Posterior vena cava (tissue), 2 donors: ENCODE measurements at regions of chr16 and their contacts with region 1.

Region 1: DNA sequence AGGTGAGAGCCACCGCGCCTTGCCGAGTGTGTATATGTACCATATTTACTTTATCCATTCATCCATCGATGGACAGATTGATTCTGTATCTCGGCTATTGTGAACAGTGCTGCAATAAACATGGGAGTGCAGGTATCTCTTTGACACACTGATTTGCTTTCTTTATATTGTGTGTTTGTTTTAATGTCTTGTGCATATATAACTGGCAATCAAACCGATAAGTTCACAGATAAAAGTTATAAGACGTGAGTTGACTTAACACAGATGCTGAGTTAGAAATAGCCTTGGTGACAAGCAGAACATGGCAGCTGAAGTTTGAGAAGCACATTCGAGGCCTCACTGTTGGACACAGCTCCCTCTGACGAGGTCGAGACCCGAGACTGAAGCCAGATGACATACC is 23.2 kb downstream of the TMEM186 start:
- DNase-seq: no peak

Region 2: DNA sequence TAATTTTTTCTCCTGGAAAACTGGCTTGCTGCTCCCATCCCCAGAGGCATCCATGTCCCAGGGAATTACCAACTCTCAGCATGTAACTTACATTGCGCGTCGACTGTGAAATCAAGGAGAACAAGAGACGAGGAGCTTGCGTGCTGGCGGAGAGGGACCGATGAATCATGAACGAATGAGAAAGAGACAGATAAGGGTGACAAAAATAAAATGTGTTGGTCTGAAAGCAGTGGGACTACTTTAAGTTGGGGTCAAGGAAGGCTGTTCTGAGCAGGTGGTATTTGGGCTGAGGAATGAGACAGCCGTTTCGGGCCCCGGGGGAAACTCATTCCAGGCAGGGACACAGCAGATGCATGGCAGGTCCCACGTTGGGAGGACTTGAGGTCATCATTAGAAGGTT is 77.3 kb before region 1 on chr16:
- intact Hi-C with region 1: no loop called
- DNase-seq: no peak

Region 3: DNA sequence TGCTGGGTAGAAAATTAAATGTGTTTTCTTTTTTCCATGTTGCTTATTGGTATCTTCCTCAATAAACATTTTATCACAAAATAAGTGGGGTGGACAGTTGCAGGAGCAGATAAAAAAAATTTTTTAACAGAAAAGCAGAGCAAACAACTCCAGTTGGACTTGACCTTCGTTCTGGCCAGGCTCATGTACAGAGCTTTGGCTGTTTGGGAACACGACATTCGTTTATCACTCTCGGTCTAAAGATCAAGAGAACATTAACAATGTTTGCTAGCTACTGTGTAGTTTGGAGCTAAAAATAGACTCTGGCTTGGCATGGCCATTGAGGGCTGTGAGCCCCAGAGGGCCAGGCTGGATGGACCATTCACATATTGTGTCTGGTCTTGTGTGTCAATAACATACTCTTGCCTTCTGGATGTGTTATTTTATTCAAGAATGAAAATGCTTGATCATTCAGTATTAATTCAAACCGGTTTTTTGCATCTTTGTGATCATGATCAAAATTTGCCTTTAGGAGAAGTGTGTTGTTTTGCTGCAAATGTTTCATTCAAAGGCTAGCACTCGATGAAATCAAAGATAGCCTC is 33.3 kb before region 1 on chr16:
- intact Hi-C with region 1: loop called in 1 of 2 experiments (anchors 1 kb)
- DNase-seq: no peak

Region 4: DNA sequence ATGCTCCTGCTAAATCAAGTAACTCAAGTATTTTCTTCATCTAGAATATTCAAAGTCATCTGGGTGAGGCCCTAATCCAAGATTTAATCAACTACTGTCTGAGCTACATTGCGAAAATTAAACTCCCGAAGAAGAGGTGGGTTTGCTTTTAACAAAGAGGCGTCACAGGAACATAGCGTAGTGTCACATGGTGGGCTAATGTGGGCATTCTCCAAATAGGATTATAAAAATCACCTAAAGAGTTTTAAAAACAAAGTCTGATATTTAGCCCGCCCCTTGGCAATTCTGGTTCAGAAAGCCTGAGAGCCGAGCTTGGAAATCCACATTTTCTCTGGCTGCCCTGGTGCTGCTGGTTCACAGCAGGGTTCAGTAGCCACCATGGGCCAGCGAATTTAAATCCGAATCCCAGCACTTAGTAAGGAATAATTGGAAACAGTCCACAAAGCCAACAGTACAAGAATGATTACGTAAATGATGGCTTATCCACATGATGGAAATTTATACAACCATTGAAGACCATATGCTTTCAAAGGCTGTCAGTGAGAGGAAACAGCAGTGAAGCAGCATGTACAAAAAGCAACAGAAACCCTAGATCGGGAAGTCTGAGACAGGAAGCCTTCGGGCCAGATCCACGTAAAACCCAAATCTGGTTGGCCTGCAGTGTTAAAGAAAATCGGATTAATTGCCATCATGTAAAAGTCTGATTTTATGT is 32.2 kb after region 1 on chr16:
- intact Hi-C with region 1: no loop called
- DNase-seq: no peak

Region 5: DNA sequence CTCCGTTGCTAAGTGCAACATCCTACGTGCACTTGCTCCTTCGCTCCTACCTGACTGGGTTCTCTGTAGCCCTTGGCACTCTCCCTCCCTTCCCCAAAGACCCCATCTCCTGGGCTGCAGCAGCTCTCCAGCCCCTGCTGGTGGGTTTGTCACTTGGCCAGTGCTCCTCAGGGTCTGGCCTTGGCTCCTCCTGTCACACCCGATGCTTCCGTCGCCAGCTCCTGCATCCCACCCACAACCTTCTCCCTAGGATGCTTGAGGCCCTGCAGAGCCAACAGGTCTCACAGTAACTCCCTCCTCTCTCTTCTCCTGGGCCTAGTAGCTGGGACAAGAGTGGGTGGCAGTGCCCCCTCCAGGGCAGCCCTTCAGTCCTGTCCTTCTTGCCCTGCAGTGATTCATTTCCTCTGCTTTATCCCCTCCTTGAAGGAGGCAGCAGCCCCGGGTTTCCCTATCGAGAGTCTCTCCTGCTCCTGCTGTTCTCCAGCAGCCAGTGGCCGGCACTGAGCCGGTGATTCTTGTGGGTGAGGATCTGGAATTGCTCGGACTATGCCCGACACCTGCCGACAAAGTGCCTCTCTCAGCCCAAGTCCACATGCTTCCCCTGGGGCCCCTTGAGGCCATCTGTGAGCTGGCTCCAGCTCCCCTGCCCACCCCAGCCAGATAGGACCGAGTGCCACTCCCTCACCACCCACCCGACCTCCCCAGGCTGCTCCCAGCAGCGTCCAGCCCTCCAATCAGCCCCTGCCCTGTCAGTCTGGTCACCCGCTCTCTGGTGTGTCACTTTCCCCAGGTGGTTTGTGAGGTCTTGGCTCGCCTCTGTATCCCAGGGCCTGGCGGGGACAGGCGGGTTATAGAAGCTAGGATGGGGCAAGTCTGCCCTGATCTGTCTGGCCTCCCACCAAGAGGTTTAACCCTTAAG is 111.7 kb after region 1 on chr16:
- intact Hi-C with region 1: no loop called
- DNase-seq: peak; percentile 71

Region 6: DNA sequence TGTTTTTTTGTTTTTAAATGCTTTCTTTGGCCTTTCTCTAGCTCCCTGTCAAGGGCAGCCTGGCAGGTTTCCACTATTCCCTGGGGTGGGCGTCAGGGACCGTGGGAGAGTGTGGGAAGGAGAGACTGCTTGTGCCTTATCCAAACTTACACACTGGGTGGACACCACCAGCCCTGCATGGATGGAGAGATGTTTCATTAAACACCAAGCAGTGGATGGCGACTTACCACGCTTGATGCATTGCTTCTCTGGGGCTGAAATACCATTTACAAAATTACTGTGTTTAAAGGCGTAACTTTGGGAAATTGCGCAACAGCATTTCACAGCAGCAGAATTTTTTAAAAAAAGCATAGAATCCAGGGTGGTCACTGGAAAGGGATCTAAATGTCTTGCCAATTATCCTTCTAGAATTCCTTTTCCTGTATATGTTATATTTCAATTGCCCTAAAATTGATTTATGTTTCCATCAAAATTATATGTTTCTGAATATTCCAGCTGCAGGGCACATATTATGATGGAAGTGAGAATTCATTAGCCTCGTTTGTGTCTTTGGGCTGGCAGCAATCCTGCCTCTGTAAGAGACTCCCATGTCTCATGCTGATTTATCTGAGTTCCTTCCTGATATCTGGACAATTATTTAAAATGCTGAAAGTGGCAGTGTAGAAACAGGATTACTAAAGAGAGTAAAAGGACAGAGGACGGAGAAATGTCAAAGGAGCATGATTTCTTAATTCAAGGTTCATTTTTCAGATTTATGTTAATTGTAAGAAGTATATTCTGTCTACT is 1160.7 kb after region 1 on chr16:
- intact Hi-C with region 1: no loop called
- DNase-seq: peak; percentile 88